CD4-positive, alpha-beta T cell (primary cell): ENCODE measurements at regions of chr2 and their contacts with region 1.

Region 1: DNA sequence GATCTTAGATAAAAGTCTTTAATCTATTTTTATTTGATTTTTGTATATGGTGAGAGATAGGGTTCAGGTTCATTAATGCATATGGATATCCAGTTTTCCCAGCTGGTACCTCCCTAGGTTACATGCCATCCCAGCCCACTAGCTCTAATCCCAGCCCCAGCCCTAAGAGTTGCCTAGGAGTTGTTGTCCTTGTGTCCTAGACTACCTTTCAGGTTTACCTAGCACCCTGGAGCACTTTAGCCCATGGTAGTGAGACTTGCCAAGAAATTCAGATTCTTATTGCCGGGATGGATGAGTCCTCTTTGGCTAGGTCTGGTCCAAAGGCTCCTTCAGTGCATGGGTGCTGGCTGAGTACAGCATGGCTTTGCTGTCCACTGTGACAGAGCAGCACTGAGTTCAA is 40.5 kb downstream of the ZNF638 start:
- DNase-seq: no peak
- ATAC-seq: no peak
- H3K4me3 ChIP-seq: no peak overlapping the region
- H3K4me3 Mint-ChIP-seq: no peak overlapping the region
- H3K27ac ChIP-seq: no peak overlapping the region
- H3K27ac Mint-ChIP-seq: peak overlapping the region; percentile 9
- H3K4me1 ChIP-seq: no peaks in the 10 kb centered on the region
- H3K4me1 Mint-ChIP-seq: peaks cover 33% of the 10 kb centered on the region
- H3K27me3 ChIP-seq: no peaks in the 10 kb centered on the region
- H3K27me3 Mint-ChIP-seq: no peaks in the 10 kb centered on the region
- CTCF ChIP-seq: no peak

Region 2: DNA sequence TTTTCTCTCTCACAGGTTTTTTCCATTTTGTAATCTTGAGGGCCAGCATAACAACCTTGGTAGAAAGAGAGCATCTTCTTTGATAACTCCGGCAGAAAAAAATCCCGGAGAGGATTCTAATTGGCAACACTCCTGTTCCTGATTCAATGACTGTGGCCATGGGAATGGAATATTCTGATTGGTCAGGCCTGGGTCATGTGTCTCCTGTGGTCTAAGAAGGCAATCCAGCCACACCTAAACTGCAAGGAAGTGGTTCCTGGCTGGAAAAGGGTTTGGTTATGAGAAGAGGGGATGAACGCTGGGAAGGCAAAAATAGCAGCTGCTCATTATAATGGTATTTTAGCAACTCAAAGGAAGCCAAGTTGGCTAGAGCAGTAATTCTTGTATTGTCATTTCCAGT is 65.3 kb before region 1 on chr2:
- CTCF ChIA-PET with region 1: no interaction called
- POLR2A ChIA-PET with region 1: no interaction called
- intact Hi-C with region 1: no loop called
- DNase-seq: no peak
- ATAC-seq: no peak
- H3K4me3 ChIP-seq: no peak overlapping the region
- H3K4me3 Mint-ChIP-seq: no peak overlapping the region
- H3K27ac ChIP-seq: no peak overlapping the region
- H3K27ac Mint-ChIP-seq: no peak overlapping the region
- H3K4me1 ChIP-seq: no peaks in the 10 kb centered on the region
- H3K4me1 Mint-ChIP-seq: no peaks in the 10 kb centered on the region
- H3K27me3 ChIP-seq: no peaks in the 10 kb centered on the region
- H3K27me3 Mint-ChIP-seq: peaks cover 7% of the 10 kb centered on the region
- CTCF ChIP-seq: no peak

Region 3: GRCh38 chr2:71348302-71348701 is 23.7 kb before region 1 on chr2:
- CTCF ChIA-PET with region 1: no interaction called
- POLR2A ChIA-PET with region 1: no interaction called
- intact Hi-C with region 1: no loop called
- DNase-seq: peak in 3 of 14 experiments; percentile 36 to 45 (median 42)
- ATAC-seq: no peak
- H3K4me3 ChIP-seq: no peak overlapping the region
- H3K4me3 Mint-ChIP-seq: no peak overlapping the region
- H3K27ac ChIP-seq: no peak overlapping the region
- H3K27ac Mint-ChIP-seq: no peak overlapping the region
- H3K4me1 ChIP-seq: peaks cover 6% of the 10 kb centered on the region
- H3K4me1 Mint-ChIP-seq: peaks cover 89% of the 10 kb centered on the region
- H3K27me3 ChIP-seq: no peaks in the 10 kb centered on the region
- H3K27me3 Mint-ChIP-seq: no peaks in the 10 kb centered on the region
- CTCF ChIP-seq: no peak

Region 4: GRCh38 chr2:71402417-71402816 is 30.4 kb after region 1 on chr2:
- CTCF ChIA-PET with region 1: no interaction called
- POLR2A ChIA-PET with region 1: no interaction called
- intact Hi-C with region 1: loop called in 1 of 2 experiments (anchors 5 kb)
- DNase-seq: no peak
- ATAC-seq: no peak
- H3K4me3 ChIP-seq: no peak overlapping the region
- H3K4me3 Mint-ChIP-seq: no peak overlapping the region
- H3K27ac ChIP-seq: no peak overlapping the region
- H3K27ac Mint-ChIP-seq: peak overlapping the region; percentile 55
- H3K4me1 ChIP-seq: no peaks in the 10 kb centered on the region
- H3K4me1 Mint-ChIP-seq: peaks cover 5% of the 10 kb centered on the region
- H3K27me3 ChIP-seq: no peaks in the 10 kb centered on the region
- H3K27me3 Mint-ChIP-seq: no peaks in the 10 kb centered on the region
- CTCF ChIP-seq: no peak